Activated B cell treated with CpG ODN at 0.5 μM for 24 hours (primary cell): ENCODE measurements at regions of chr6 and their contacts with region 1.

Region 1: GRCh38 chr6:34248727-34249551 is at the start of gene SMIM29:
- DNase-seq: peak; percentile 98
- ATAC-seq: peak; percentile 90
- H3K4me3 Mint-ChIP-seq: peak within 1 kb of the TSS; percentile 95
- H3K27ac Mint-ChIP-seq: peak within 1 kb of the TSS; percentile 96
- H3K4me1 Mint-ChIP-seq: peaks cover 53% of the 10 kb centered on the region
- H3K27me3 Mint-ChIP-seq: no peaks in the 10 kb centered on the region
- CTCF ChIP-seq: no peak
- total RNA-seq, gene SMIM29: 25.8 and 27.7 TPM in 2 replicates

Region 2: DNA sequence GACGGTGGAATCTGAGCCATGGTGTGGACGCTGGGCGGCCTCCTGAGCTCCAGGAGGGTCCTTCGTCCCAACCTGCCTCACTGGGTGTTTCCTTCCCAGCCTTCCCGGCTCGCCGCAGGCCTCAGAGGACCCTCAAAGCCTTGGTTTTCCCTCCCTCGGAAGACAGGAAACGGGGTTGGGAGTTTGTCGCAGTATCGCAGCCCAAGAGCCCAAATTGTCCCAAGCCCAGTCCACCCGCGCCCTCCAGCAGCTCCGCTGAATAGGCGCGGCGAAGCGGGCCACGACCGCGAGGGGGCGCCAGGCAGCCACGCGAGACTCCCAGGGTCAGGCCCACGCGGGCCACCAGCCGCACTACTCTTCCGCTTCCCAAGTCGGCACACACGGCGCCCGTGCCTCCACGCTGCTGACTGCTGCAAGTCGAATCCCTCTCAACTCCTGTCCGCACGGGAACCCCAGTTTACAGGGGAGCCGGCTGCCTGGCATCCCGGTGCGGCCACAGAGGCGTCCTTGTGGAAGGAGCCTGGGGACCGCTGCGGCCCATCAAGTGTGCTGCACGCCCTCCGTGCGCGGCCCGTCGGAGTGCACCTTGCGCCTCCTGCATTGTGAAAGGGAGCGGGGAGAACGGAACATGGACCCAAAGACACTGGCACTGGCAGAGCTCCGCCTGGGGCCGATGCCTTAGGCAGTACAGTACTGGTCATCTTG is 52.7 kb before region 1 on chr6:
- CTCF ChIA-PET with region 1: interaction called, 62 read pairs
- POLR2A ChIA-PET with region 1: interaction called, 33 read pairs
- intact Hi-C with region 1: loop called (anchors 1 kb)
- DNase-seq: peak; percentile 94
- ATAC-seq: peak; percentile 99
- H3K4me3 Mint-ChIP-seq: peak overlapping the region; percentile 91
- H3K27ac Mint-ChIP-seq: peak overlapping the region; percentile 83
- H3K4me1 Mint-ChIP-seq: peaks cover 8% of the 10 kb centered on the region
- H3K27me3 Mint-ChIP-seq: no peaks in the 10 kb centered on the region
- CTCF ChIP-seq: peak; percentile 78

Region 3: GRCh38 chr6:34236131-34236996 is 12.6 kb before region 1 on chr6 and contains the start of gene HMGA1:
- CTCF ChIA-PET with region 1: interaction called, 5 read pairs
- POLR2A ChIA-PET with region 1: interaction called, 70 read pairs
- intact Hi-C with region 1: loop called (anchors 1 kb)
- DNase-seq: peak; percentile 90
- ATAC-seq: peak; percentile 77
- H3K4me3 Mint-ChIP-seq: peak within 1 kb of the TSS; percentile 89
- H3K27ac Mint-ChIP-seq: peak within 1 kb of the TSS; percentile 95
- H3K4me1 Mint-ChIP-seq: peaks cover 36% of the 10 kb centered on the region
- H3K27me3 Mint-ChIP-seq: no peaks in the 10 kb centered on the region
- CTCF ChIP-seq: no peak
- total RNA-seq, gene HMGA1: 186 and 188 TPM in 2 replicates

Region 4: GRCh38 chr6:34392497-34393190 is 143.7 kb after region 1 on chr6 and contains the start of gene NUDT3:
- CTCF ChIA-PET with region 1: interaction called, 31 read pairs
- POLR2A ChIA-PET with region 1: interaction called, 24 read pairs
- intact Hi-C with region 1: loop called (anchors 1 kb)
- DNase-seq: peak; percentile 96
- ATAC-seq: peak; percentile 87
- H3K4me3 Mint-ChIP-seq: no peak within 1 kb of the TSS
- H3K27ac Mint-ChIP-seq: peak within 1 kb of the TSS; percentile 95
- H3K4me1 Mint-ChIP-seq: peaks cover 26% of the 10 kb centered on the region
- H3K27me3 Mint-ChIP-seq: no peaks in the 10 kb centered on the region
- CTCF ChIP-seq: no peak
- total RNA-seq, gene NUDT3: 24.1 and 27.0 TPM in 2 replicates

Region 5: GRCh38 chr6:34526992-34527728 is 278.2 kb after region 1 on chr6:
- CTCF ChIA-PET with region 1: no interaction called
- POLR2A ChIA-PET with region 1: no interaction called
- intact Hi-C with region 1: loop called (anchors 2 kb)
- DNase-seq: peak; percentile 92
- ATAC-seq: peak; percentile 98
- H3K4me3 Mint-ChIP-seq: peak overlapping the region; percentile 69
- H3K27ac Mint-ChIP-seq: peak overlapping the region; percentile 66
- H3K4me1 Mint-ChIP-seq: peaks cover 7% of the 10 kb centered on the region
- H3K27me3 Mint-ChIP-seq: no peaks in the 10 kb centered on the region
- CTCF ChIP-seq: no peak

Region 6: GRCh38 chr6:35240840-35241801 is 992.2 kb after region 1 on chr6:
- CTCF ChIA-PET with region 1: no interaction called
- POLR2A ChIA-PET with region 1: no interaction called
- intact Hi-C with region 1: loop called (anchors 5 kb)
- DNase-seq: peak; percentile 63
- ATAC-seq: peak; percentile 81
- H3K4me3 Mint-ChIP-seq: no peak overlapping the region
- H3K27ac Mint-ChIP-seq: no peak overlapping the region
- H3K4me1 Mint-ChIP-seq: no peaks in the 10 kb centered on the region
- H3K27me3 Mint-ChIP-seq: no peaks in the 10 kb centered on the region
- CTCF ChIP-seq: peak; percentile 100